CD8-positive, alpha-beta T cell (primary cell): ENCODE measurements at regions of chr15 and their contacts with region 1.

Region 1: DNA sequence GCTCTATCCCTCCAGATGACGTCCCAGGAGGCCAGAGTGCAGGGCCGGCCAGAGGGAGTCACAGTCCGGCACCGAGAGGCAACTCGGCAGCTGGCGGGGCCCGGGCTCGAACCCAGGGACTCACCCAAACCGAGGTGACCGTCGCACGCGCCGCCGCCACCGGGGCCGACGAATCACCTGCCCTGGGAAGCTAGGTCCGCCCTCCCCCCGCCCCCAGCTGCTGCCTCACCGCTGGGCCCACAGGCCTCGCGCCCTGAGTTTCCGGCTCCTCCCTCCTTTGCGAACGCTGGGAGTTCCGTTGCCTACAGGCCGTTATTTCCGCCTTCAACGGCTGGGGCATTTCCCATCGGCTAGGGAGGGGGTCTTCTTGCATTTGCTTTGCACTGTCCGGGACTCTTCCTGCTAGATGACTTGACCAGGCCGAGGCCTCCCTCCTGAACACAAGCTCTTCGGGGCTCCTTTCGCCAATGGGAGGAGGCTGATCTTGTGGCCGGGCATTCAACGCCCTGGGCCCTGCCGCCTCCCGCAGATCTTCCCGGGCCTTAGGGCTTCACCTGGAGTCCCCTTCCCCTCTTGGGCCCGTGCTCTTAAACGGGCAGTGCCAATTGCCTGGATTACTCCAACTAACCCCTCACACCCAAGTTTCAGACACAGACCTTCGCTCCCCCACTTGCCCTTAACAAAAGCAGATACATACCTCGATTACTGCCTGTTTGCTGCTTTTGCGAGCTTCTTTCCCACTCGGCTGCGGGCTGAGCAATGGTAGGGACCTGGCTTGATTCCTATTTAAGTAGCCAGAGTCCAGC is at the start of gene SNUPN:
- DNase-seq: peak; percentile 83 to 98 (median 93)
- ATAC-seq: peak; percentile 93
- H3K4me3 ChIP-seq: peak within 1 kb of the TSS; percentile 100
- H3K4me3 Mint-ChIP-seq: peak within 1 kb of the TSS; percentile 95
- H3K27ac ChIP-seq: peak within 1 kb of the TSS; percentile 75 to 99
- H3K27ac Mint-ChIP-seq: peak within 1 kb of the TSS; percentile 99
- H3K4me1 ChIP-seq: peaks cover 16% of the 10 kb centered on the region
- H3K4me1 Mint-ChIP-seq: peaks cover 34% of the 10 kb centered on the region
- H3K27me3 ChIP-seq: no peaks in the 10 kb centered on the region
- H3K27me3 Mint-ChIP-seq: no peaks in the 10 kb centered on the region
- CTCF ChIP-seq: no peak
- total RNA-seq, gene SNUPN: 7.7 TPM

Region 2: DNA sequence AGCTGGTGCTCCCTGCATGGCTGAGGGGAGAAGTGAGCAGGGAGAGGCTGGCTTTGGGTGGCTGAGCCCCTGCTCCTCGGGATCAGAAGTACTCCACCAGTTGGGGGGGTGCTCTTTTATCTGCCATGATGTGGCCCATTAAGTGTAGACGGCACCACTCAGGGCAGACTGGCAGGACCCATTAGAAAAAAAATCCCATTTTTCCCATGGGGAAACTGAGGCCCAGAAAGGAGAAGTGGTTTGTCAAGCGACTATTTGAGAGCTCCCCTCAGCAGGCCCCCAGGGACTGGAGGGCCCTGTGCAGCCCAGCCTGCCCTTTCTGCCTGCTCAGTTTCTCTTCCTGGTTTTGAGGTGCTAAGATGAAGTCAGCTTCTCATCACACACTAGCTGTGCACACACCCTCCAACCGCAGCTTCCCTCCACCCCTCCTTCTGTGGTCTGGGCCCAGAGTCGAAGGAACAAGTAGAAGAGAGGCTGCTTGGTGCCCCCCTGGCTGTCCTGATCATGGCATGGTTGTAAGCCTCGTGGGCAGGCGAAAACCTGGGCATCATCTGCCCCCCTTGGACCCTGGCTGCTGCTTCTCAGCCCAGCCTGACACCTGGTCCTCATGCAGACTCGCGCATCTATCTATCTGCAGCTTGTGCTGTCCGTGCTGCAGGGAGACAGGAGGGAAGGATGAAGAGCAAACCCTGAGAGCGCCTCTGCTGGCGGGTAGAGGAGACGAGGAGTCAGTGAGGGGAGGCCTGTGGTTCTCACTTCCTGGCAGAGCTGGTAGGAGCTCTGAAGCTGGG is 838.3 kb before region 1 on chr15:
- CTCF ChIA-PET with region 1: no interaction called
- POLR2A ChIA-PET with region 1: no interaction called
- intact Hi-C with region 1: loop called in 1 of 2 experiments (anchors 10 kb)
- DNase-seq: peak; percentile 81 to 97 (median 92)
- ATAC-seq: peak; percentile 71
- H3K4me3 ChIP-seq: peak overlapping the region; percentile 83 to 98
- H3K4me3 Mint-ChIP-seq: peak overlapping the region; percentile 83
- H3K27ac ChIP-seq: peak overlapping the region; percentile 53 to 90
- H3K27ac Mint-ChIP-seq: peak overlapping the region; percentile 92
- H3K4me1 ChIP-seq: peaks cover 76% of the 10 kb centered on the region
- H3K4me1 Mint-ChIP-seq: peaks cover 71% of the 10 kb centered on the region
- H3K27me3 ChIP-seq: no peaks in the 10 kb centered on the region
- H3K27me3 Mint-ChIP-seq: no peaks in the 10 kb centered on the region
- CTCF ChIP-seq: peak; percentile 62

Region 3: GRCh38 chr15:75508840-75509532 is 116.8 kb before region 1 on chr15:
- CTCF ChIA-PET with region 1: interaction called, 5 read pairs
- POLR2A ChIA-PET with region 1: no interaction called
- intact Hi-C with region 1: loop called in 1 of 2 experiments (anchors 1 kb)
- DNase-seq: peak in 5 of 9 experiments; percentile 11 to 64 (median 26)
- ATAC-seq: peak; percentile 54
- H3K4me3 ChIP-seq: no peak overlapping the region
- H3K4me3 Mint-ChIP-seq: no peak overlapping the region
- H3K27ac ChIP-seq: no peak overlapping the region
- H3K27ac Mint-ChIP-seq: peak overlapping the region; percentile 50
- H3K4me1 ChIP-seq: no peaks in the 10 kb centered on the region
- H3K4me1 Mint-ChIP-seq: peaks cover 5% of the 10 kb centered on the region
- H3K27me3 ChIP-seq: no peaks in the 10 kb centered on the region
- H3K27me3 Mint-ChIP-seq: no peaks in the 10 kb centered on the region
- CTCF ChIP-seq: peak; percentile 54

Region 4: DNA sequence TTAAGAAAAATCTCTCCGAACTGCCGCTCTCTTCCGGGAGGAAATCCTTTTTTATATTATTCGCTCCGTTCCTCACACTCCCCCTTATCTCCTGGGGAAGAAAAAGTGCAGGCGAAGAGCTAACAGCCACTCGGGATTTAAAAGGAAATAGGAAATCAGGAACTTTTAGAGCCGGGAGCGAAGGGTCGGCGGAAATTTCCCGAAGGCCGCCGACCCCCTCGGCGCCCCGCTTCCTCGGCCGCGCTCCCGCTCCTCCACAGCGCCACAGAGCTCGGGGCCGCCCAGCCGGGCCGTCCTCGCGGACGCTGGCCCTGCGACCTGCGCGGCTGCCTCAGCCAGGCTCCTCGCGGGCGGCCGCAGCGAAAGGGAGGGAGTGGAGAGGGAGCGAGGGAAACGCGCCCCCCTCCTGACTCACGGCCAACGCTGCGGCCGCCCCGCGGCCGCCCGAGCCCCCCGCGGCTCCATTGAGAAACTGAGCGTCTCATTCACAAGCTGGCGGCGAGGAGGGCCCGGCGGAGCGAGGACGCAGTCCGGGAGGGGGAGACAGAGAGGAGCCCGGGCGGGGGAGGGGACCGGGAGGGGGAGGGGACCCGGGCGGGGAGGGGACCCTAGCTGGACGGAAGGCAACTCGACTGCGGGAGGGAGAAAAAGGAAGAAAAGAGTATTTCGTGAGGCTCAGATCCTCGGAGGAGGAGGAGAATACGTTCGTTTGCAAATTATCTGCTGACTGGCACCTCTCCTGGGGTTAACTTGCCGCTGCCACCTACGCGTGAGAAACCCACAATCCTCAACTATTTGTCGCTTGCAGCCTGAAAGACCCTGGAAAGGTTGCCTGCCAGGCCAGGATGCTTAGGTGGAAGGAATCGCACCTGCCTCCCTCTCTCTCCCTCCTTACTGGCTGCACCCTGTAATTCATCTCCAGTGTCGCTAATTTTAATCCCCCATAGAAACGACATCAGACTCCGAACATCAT is 46.5 kb before region 1 on chr15 and contains the start of gene PTPN9:
- CTCF ChIA-PET with region 1: interaction called, 5 read pairs
- POLR2A ChIA-PET with region 1: interaction called, 6 read pairs
- intact Hi-C with region 1: loop called (anchors 1 kb)
- DNase-seq: peak; percentile 24 to 81 (median 68)
- ATAC-seq: peak; percentile 83
- H3K4me3 ChIP-seq: peak within 1 kb of the TSS; percentile 77 to 83
- H3K4me3 Mint-ChIP-seq: peak within 1 kb of the TSS; percentile 94
- H3K27ac ChIP-seq: peak within 1 kb of the TSS; percentile 25 to 73
- H3K27ac Mint-ChIP-seq: peak within 1 kb of the TSS; percentile 86
- H3K4me1 ChIP-seq: peaks cover 14% of the 10 kb centered on the region
- H3K4me1 Mint-ChIP-seq: peaks cover 23% of the 10 kb centered on the region
- H3K27me3 ChIP-seq: no peaks in the 10 kb centered on the region
- H3K27me3 Mint-ChIP-seq: no peaks in the 10 kb centered on the region
- CTCF ChIP-seq: peak; percentile 43
- total RNA-seq, gene PTPN9: 4.8 to 5.6 TPM

Region 5: GRCh38 chr15:75647370-75648155 is 21.8 kb after region 1 on chr15 and contains the start of gene SNX33:
- CTCF ChIA-PET with region 1: interaction called, 8 read pairs
- POLR2A ChIA-PET with region 1: interaction called, 16 read pairs
- intact Hi-C with region 1: no loop called
- DNase-seq: peak in 8 of 9 experiments; percentile 12 to 68 (median 54)
- ATAC-seq: peak; percentile 68
- H3K4me3 ChIP-seq: peak within 1 kb of the TSS; percentile 79 to 89
- H3K4me3 Mint-ChIP-seq: peak within 1 kb of the TSS; percentile 82
- H3K27ac ChIP-seq: peak within 1 kb of the TSS; percentile 31 to 51
- H3K27ac Mint-ChIP-seq: peak within 1 kb of the TSS; percentile 57
- H3K4me1 ChIP-seq: peaks cover 20% of the 10 kb centered on the region
- H3K4me1 Mint-ChIP-seq: peaks cover 26% of the 10 kb centered on the region
- H3K27me3 ChIP-seq: no peaks in the 10 kb centered on the region
- H3K27me3 Mint-ChIP-seq: no peaks in the 10 kb centered on the region
- CTCF ChIP-seq: no peak
- total RNA-seq, gene SNX33: 0.56 to 0.95 TPM